Vagina (tissue), 2 donors: ENCODE measurements at regions of chrX and their contacts with region 1.

Region 1: GRCh38 chrX:28586981-28587551 is at the start of gene IL1RAPL1:
- DNase-seq: no peak
- H3K4me3 ChIP-seq: peak within 1 kb of the TSS; percentile 28 to 31
- H3K27ac ChIP-seq: no peak within 1 kb of the TSS
- H3K4me1 ChIP-seq: no peaks in the 10 kb centered on the region
- H3K27me3 ChIP-seq: no peaks in the 10 kb centered on the region
- CTCF ChIP-seq: no peak
- POLR2A ChIP-seq: no peak
- total RNA-seq, gene IL1RAPL1: not detected

Region 2: GRCh38 chrX:28649541-28649940 is 62.5 kb after region 1 on chrX:
- intact Hi-C with region 1: loop called (anchors 10 kb)
- DNase-seq: no peak
- H3K4me3 ChIP-seq: no peak overlapping the region
- H3K27ac ChIP-seq: no peak overlapping the region
- H3K4me1 ChIP-seq: no peaks in the 10 kb centered on the region
- H3K27me3 ChIP-seq: no peaks in the 10 kb centered on the region
- CTCF ChIP-seq: no peak
- POLR2A ChIP-seq: no peak